ENCODE measurements at regions of chr20 and their contacts with region 1.

Region 1: DNA sequence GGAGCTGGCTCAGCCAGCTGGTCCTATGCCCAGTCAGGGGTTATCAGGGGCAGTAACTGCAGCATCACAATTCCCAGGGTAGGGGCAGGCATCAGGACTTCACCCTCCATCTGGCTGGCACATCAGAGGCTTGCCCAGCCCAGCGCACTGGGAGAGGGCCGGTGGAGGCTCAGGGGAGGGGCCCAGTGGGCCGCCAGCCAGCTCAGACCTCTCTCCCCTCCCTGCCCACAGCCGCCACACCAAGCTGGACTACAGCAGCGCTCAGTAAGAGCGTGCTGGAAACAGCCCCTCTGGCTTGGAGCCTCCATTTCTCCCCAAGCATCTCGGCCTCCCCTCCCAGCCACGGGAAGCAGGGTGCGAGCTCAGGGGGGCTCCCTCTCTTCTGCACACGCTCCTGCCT is 22.0 kb downstream of the ADA start:
- DNase-seq: no peak
- H3K4me3 ChIP-seq: no peak overlapping the region
- H3K27ac ChIP-seq: no peak overlapping the region
- H3K4me1 ChIP-seq: no peaks in the 10 kb centered on the region
- H3K27me3 ChIP-seq: no peaks in the 10 kb centered on the region

Region 2: DNA sequence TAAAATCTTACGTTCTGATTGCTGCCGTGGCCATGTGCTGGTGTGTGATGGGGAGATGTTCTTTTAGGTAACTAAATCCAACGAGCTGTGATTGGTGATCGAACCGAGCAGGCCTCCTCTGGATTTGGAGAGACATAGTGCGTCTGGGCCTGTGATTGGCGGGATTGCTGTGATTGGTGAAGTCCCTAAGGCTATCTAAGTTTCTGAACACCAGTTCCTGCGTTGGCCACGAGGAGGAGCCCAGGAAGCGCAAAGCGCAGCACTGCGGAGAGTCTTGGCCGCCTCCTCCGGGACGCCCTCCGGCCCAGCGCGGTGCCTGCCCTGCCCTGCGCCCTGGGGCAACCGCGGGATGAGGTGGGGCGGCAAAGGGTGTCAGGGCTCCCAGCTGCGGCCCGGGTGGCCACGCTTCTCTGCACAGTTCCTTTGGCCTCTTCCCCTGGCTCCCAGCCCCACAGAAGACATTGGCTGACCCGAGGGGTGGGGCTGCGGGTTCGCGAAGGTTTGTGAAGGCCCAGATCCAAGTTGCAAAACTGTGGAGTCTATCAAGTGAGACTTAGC is 241.0 kb before region 1 on chr20:
- in situ Hi-C with region 1: loop called (anchors 10 kb)
- DNase-seq: peak; percentile 78
- H3K4me3 ChIP-seq: no peak overlapping the region
- H3K27ac ChIP-seq: no peak overlapping the region
- H3K4me1 ChIP-seq: no peaks in the 10 kb centered on the region; the same call in 1 of the 2 replicates
- H3K27me3 ChIP-seq: 0 out of 2 replicates have a peak, but pooled peaks cover 14% of the 10 kb centered on the region

Region 3: GRCh38 chr20:44747166-44748004 is 117.8 kb after region 1 on chr20:
- in situ Hi-C with region 1: no loop called
- DNase-seq: peak; percentile 82
- H3K4me3 ChIP-seq: peak overlapping the region; percentile 76; the same call in 1 of the 2 replicates
- H3K27ac ChIP-seq: no peak overlapping the region
- H3K4me1 ChIP-seq: no peaks in the 10 kb centered on the region
- H3K27me3 ChIP-seq: peaks cover under 1% of the 10 kb centered on the region

Region 4: DNA sequence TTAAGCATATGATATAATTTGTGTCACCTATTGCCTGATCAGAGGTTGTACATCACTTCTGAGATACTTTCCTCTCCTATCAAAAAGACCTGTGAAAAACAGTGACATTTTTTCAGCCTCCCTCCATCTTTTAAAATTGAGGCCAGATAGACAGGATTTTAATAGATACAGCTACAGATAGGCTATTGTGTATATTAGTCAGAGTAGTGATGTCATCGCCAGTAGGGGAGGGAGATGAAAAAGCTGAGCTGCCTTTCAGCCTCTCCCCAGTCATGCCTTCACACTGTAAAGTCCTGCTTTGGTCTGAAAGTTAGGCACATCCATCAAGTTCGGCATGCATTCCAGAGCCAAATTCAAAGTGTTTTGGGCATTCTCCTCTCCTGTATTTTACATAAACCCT is 272.4 kb after region 1 on chr20:
- in situ Hi-C with region 1: no loop called
- DNase-seq: peak; percentile 69
- H3K4me3 ChIP-seq: no peak overlapping the region
- H3K27ac ChIP-seq: no peak overlapping the region
- H3K4me1 ChIP-seq: peaks cover 16% of the 10 kb centered on the region
- H3K27me3 ChIP-seq: no peaks in the 10 kb centered on the region